Activated CD4-positive, alpha-beta T cell treated with anti-CD3 and anti-CD28 coated beads for 36 hours (primary cell): ENCODE measurements at regions of chr6 and their contacts with region 1.

Region 1: DNA sequence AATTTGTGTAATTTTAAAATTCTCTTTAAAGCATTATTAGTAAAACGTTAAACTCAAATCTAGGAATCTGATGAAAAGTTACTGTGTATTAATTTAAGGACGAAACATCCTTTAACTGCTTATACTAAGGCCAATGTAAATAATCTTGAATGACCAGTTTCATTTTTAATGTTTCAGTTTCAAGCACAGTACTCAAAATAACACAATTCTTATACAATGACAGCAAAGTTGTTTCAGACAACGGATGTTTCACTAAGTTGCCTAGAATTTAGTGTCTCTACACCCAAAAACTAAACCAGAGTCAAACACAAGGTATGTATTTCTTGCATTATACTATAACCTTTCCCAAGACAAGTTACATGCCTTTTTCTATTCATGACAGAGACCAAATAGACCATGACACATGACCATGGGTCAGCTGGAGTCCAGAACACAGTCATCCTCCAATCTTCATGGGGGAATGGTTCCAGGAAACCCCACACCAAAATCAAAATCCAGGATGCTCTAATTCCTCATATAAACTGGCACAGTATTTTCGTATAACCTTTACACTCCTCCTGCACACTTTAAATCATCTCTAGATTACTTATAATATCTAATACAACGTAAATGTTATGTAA is 7.7 kb downstream of the PHIP start:
- DNase-seq: no peak
- ATAC-seq: no peak
- H3K4me3 Mint-ChIP-seq: no peak overlapping the region
- H3K27ac Mint-ChIP-seq: no peak overlapping the region
- H3K4me1 Mint-ChIP-seq: peaks cover 55% of the 10 kb centered on the region
- H3K27me3 Mint-ChIP-seq: no peaks in the 10 kb centered on the region

Region 2: GRCh38 chr6:79034865-79035264 is 35.5 kb before region 1 on chr6:
- CTCF ChIA-PET with region 1: no interaction called
- POLR2A ChIA-PET with region 1: no interaction called
- intact Hi-C with region 1: loop called (anchors 1 to 2 kb)
- DNase-seq: peak; percentile 34
- ATAC-seq: peak; percentile 97
- H3K4me3 Mint-ChIP-seq: no peak overlapping the region
- H3K27ac Mint-ChIP-seq: peak overlapping the region; percentile 72
- H3K4me1 Mint-ChIP-seq: peaks cover 70% of the 10 kb centered on the region
- H3K27me3 Mint-ChIP-seq: no peaks in the 10 kb centered on the region

Region 3: DNA sequence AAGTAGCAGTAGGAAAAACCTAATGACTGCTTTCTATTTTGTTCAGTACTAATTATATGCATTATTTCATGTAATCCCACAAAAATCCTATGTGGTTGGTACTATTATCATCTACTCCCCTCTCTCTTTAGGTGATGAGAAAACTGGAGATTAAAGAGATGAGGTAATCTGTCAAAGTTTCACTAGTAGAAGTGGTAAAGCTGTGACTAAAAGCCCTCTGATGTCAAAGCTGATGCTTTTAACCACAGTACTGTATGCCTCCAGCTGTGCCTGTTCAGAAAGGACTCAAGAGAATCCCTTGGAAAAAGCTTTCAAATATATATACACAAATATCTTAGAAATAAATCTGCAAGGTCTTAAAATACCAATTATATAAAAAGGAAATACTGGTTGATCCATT is 30.2 kb before region 1 on chr6:
- CTCF ChIA-PET with region 1: interaction called, 4 read pairs
- POLR2A ChIA-PET with region 1: no interaction called
- intact Hi-C with region 1: loop called (anchors 1 to 2 kb)
- DNase-seq: peak; percentile 20
- ATAC-seq: peak; percentile 91
- H3K4me3 Mint-ChIP-seq: no peak overlapping the region
- H3K27ac Mint-ChIP-seq: no peak overlapping the region
- H3K4me1 Mint-ChIP-seq: peaks cover 66% of the 10 kb centered on the region
- H3K27me3 Mint-ChIP-seq: no peaks in the 10 kb centered on the region

Region 4: DNA sequence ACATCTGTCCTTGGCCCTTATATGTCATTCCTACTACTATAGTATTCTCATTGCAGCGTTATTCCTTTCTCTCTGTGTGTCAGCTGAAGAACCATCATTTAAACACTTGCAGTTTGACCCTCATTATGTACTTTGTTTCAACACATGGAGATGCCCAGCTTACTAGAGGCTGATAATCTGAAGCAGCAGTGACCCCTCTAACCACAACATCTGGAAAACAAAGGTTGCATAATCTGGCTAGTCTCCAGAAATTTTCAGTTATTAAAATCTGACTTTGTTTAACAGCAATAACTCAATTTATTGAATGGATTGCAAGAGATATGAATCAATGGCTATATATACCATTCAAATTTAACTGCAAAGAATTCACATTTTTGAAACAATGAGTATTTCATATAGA is 14.4 kb after region 1 on chr6:
- CTCF ChIA-PET with region 1: no interaction called
- POLR2A ChIA-PET with region 1: no interaction called
- intact Hi-C with region 1: no loop called
- DNase-seq: no peak
- ATAC-seq: no peak
- H3K4me3 Mint-ChIP-seq: no peak overlapping the region
- H3K27ac Mint-ChIP-seq: no peak overlapping the region
- H3K4me1 Mint-ChIP-seq: peaks cover 2% of the 10 kb centered on the region
- H3K27me3 Mint-ChIP-seq: peaks cover 11% of the 10 kb centered on the region